OCI-LY7 (cell line): ENCODE measurements at regions of chr1 and their contacts with region 1.

Region 1: DNA sequence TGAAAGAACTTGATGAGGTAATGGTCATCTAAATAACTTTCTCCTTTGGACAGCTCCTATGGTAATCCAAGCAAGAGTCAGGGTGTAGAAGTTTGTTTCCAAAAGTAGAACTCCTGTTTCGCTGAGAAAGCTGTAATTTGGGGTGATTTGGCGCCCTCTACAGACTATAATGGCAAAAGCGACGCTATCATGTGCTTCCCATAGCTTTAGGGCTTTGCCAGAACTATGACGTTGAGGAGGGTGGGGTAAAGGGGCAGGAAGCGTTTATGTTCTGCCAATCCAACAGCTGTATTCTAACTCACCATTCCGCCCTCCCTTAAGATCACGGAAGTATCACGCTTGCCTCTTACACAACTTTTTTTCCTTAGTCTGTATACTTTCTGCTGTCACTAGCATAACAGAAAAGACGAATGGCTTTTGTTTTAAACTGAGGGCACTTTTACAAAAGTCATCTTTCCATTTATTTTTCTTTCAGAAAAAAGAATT is at the start of gene FMO4:
- DNase-seq: peak; percentile 98
- H3K4me3 ChIP-seq: peak within 1 kb of the TSS; percentile 64
- H3K27ac ChIP-seq: peak within 1 kb of the TSS; percentile 52
- H3K4me1 ChIP-seq: peaks cover 16% of the 10 kb centered on the region
- CTCF ChIP-seq: peak; percentile 99
- total RNA-seq, gene FMO4: 3.9 and 4.0 TPM in 2 replicates

Region 2: GRCh38 chr1:170685166-170685565 is 628.7 kb before region 1 on chr1:
- CTCF ChIA-PET with region 1: no interaction called
- POLR2A ChIA-PET with region 1: no interaction called
- intact Hi-C with region 1: loop called (anchors 10 kb)
- DNase-seq: no peak
- H3K4me3 ChIP-seq: no peak overlapping the region
- H3K27ac ChIP-seq: no peak overlapping the region
- H3K4me1 ChIP-seq: no peaks in the 10 kb centered on the region
- CTCF ChIP-seq: no peak

Region 3: GRCh38 chr1:171081314-171081753 is 232.5 kb before region 1 on chr1:
- CTCF ChIA-PET with region 1: interaction called, 19 read pairs
- POLR2A ChIA-PET with region 1: interaction called, 5 read pairs
- intact Hi-C with region 1: loop called (anchors 2 kb)
- DNase-seq: peak; percentile 36
- H3K4me3 ChIP-seq: no peak overlapping the region
- H3K27ac ChIP-seq: no peak overlapping the region
- H3K4me1 ChIP-seq: no peaks in the 10 kb centered on the region
- CTCF ChIP-seq: peak; percentile 78

Region 4: DNA sequence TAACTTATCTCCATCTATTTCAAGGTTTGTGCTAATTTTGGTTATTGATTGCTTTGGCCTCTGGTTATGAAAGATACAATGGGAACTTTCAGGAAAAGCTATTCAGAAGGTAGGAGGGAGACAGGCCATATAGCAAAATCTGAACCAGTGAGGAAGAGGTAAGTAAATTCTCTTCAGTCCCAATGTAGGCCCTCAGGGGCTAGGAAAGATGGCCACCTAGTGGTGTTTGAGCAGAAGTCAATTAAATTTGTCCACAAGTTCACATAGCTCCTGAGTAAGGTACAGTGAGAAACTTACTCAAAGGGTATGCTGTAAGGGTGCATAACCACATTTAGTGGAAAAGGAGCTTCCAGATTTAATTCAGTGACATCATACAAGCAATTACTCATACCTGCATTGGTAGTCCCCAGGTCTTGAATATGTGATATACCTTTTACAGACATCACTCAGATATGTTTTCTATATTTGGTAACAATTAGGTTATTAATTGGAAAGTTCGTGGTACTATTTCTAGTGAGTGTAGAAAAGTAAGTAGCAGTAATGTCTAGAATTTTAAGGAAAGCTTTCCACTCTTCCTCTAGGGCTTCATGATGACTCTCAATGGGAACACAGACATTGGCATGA is 87.0 kb before region 1 on chr1:
- CTCF ChIA-PET with region 1: interaction called, 9 read pairs
- POLR2A ChIA-PET with region 1: interaction called, 4 read pairs
- intact Hi-C with region 1: loop called (anchors 5 kb)
- DNase-seq: peak; percentile 73
- H3K4me3 ChIP-seq: no peak overlapping the region
- H3K27ac ChIP-seq: no peak overlapping the region
- H3K4me1 ChIP-seq: peaks cover 7% of the 10 kb centered on the region
- CTCF ChIP-seq: peak; percentile 93

Region 5: DNA sequence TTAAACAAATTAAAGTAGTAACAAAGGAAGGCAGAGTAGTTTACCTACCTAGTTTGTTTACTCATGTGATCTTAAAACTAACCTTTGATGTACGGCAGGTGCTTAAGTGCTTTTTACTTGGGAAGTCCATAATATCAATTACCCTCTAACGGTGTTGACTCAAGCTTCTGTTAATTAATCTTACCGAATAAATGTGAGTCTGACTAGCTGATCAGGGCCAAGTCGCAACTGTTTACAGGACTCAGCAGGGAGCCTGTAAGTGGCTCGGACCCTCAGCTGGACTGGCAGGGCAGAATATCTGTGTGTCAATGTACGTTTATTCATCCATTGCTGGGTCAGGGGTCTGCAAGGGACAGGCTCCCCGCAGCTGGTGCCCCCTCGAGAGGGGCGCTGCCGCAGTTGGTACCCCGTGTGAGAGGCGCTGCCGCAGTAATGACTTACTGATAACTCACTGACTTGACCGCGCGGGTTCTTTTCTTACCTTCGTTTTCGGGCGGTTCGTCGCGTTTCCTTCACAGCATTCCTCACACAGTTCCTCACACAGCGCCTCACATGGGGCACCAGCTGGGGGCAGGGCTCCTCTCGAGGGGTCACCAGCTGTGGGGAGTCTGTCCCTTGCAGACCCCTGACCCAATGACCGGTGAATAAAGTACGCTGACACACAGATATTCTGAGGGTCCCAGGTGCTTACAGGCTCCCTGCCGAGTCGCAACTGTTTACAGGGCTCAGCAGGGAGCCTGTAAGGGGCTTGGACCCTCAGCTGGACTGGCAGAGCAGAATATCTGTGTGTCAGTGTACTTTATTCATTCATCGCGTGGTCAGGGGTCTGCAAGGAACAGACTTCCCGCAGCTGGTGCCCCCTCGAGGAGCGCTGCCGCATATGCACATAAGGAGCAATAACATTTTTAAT is 62.6 kb before region 1 on chr1:
- CTCF ChIA-PET with region 1: interaction called, 32 read pairs
- POLR2A ChIA-PET with region 1: interaction called, 28 read pairs
- intact Hi-C with region 1: loop called (anchors 1 kb)
- DNase-seq: peak; percentile 87
- H3K4me3 ChIP-seq: peak overlapping the region; percentile 76
- H3K27ac ChIP-seq: peak overlapping the region; percentile 91
- H3K4me1 ChIP-seq: peaks cover 56% of the 10 kb centered on the region
- CTCF ChIP-seq: peak; percentile 81; the same call in 1 of the 2 replicates

Region 6: DNA sequence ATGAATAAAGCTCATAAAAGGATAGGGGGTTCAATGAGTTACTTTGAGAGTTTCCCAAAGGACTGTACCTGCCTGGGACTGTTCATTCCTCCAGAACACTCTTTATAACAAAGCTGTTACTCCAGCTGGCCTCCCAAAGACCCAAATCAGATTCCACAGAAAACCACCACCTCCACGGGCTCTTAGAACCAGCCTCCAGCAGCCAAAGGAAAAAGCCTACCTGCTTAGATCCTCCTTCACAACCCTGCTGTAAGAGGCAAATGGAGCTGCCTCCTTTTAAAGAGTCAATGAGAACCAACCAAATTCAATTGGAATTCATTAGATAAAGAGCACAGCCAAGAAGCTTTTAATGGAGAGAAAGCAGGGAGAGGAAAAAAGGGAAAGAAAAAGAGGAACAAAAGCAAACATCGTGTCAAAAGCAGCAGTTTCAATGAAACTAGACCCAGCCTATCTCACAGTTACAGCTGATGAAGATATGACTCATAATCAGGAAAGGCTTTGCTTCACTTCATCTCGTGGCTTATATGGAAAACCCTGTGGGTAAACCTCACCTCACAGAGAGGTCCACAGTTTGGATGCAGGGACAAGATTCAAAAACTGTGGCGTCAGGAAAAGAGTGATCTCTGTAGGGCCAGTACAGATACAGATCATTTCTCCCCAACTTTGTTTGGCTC is 27.7 kb before region 1 on chr1:
- CTCF ChIA-PET with region 1: interaction called, 5 read pairs
- POLR2A ChIA-PET with region 1: interaction called, 16 read pairs
- intact Hi-C with region 1: no loop called
- DNase-seq: peak; percentile 14
- H3K4me3 ChIP-seq: no peak overlapping the region
- H3K27ac ChIP-seq: no peak overlapping the region
- H3K4me1 ChIP-seq: peaks cover 54% of the 10 kb centered on the region
- CTCF ChIP-seq: no peak